T-cell (primary cell): ENCODE measurements at regions of chr7 and their contacts with region 1.

Region 1: DNA sequence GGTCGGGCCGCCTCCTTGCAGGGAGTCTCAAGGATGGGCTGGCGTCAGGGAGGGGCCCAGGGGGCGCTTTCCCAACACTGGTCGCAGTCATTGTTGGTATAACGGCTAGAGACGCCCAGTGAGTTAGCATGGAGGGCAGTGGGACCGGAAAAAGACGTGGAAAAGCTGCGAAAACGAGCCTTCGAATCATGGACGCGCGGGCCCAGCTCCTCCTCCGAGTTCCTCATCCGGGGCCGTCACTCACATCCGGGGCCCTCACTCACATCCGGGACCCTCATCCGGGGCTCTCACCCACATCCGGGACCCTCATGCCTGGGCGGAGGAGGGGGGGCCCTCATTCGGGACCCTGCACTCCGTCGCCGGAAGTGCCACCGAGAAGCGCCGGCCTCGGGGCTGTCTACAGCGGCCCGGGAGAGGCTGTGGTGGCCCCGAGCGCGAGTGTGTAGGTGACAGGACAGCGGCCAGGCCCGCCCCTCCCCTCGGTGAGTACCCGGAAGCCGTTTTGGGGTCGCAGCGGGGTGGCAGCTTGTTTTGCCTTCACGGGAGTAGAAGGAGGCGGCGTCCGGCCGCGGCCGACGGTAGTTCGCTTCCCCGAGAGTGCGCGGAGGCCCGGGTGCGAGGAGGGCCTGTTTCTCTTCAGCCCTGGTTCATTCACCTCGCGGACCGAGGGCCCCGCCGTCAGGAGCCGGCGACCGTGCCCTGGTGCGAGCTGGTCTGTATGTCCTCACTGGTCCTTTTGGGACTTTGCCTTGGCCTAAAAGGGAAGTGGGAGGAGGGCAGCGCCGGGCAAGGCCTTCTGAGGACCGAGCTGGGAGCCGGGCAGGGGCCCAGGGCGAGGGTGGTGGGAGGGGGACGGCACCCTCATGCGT is at the start of gene ZNF655:
- DNase-seq: peak; percentile 86 to 96 (median 93)
- ATAC-seq: peak; percentile 84 to 88 (median 84)
- H3K4me3 ChIP-seq: peak within 1 kb of the TSS; percentile 85 to 98
- H3K4me3 Mint-ChIP-seq: peak within 1 kb of the TSS; percentile 93 to 99 (median 99)
- H3K27ac ChIP-seq: peak within 1 kb of the TSS; percentile 95
- H3K27ac Mint-ChIP-seq: peak within 1 kb of the TSS; percentile 99 to 100
- H3K4me1 ChIP-seq: peaks cover 14 to 34% of the 10 kb centered on the region in 2 experiments
- H3K4me1 Mint-ChIP-seq: peaks cover 55 to 66% (median 59%) of the 10 kb centered on the region in 3 donors
- H3K27me3 ChIP-seq: no peaks in the 10 kb centered on the region
- H3K27me3 Mint-ChIP-seq: no peaks in the 10 kb centered on the region
- total RNA-seq, gene ZNF655: 145 to 163 (median 157) TPM

Region 2: DNA sequence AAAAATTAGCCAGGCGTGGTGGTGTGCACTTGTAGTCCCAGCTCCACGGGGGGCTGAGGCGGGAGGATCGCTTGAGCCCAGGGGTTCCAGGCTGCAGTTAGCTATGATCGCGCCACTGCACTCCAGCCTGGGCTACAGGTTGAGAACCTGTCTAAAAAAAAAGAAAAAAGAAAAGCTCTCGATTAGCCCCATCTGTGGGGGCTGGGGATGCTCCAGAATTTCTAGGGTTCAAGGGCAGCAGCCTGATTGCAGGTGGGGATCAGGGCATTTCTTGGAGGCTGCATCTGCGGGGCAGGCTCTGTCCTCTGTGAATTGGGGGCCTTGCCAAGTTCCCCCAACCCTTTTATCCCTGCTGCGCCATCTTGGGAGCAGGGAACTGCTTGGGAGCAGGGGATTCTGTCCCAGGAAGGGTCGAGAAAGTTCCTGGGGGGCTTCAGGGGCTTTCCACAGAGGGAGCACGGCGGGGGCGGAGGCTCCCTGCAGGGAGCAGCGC is 233.5 kb before region 1 on chr7:
- CTCF ChIA-PET with region 1: no interaction called
- POLR2A ChIA-PET with region 1: no interaction called
- DNase-seq: peak in 1 of 35 experiments; percentile 12
- ATAC-seq: no peak
- H3K4me3 ChIP-seq: peak overlapping the region; percentile 92 to 95
- H3K4me3 Mint-ChIP-seq: peak overlapping the region; percentile 84 to 94 (median 88)
- H3K27ac ChIP-seq: peak overlapping the region; percentile 73
- H3K27ac Mint-ChIP-seq: peak overlapping the region in 1 of 2 donors; percentile 90
- H3K4me1 ChIP-seq: peaks cover 24 to 36% of the 10 kb centered on the region in 2 experiments
- H3K4me1 Mint-ChIP-seq: peaks cover 35 to 37% (median 36%) of the 10 kb centered on the region in 3 donors
- H3K27me3 ChIP-seq: no peaks in the 10 kb centered on the region
- H3K27me3 Mint-ChIP-seq: no peaks in the 10 kb centered on the region

Region 3: DNA sequence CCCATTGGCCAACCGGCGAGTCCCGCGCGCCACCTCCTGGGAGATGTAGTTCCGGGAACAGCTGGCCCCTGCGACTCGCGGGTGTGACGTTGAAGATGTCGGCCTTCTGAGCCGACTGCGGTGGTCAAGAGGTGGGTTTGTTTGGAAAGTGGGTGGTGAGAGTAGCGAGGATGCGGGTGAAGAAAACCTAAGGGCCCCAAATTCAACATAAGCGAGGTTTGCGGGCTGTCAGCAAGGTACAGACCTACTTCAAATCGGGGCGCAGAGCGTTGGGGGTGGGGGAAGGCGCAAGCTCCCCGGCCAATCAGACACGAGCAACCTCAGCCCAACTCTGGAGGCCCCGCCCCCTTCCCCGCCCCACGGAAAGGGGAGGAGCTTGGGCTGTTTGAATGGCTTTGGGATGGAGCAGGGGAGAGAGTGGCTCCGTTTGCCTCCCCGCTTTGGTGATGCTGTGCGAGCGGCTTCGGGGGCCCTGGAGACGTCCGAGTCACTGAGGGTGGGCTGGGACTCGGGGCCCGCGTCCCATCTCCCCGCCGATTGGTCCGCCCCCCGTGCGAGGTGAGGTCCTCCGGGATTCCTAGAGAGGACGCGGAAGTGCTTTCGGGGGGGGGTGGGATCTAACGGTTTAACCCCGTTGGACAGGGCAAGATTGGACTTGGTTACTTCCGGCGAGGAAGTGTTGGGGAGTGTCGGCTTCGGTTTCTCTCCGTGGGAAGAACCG is 53.8 kb before region 1 on chr7 and contains the start of gene ZKSCAN5:
- CTCF ChIA-PET with region 1: no interaction called
- POLR2A ChIA-PET with region 1: interaction called, 3 to 10 read pairs
- DNase-seq: peak; percentile 90 to 99 (median 96)
- ATAC-seq: peak; percentile 85 to 89 (median 87)
- H3K4me3 ChIP-seq: peak within 1 kb of the TSS; percentile 84 to 92
- H3K4me3 Mint-ChIP-seq: peak within 1 kb of the TSS; percentile 89 to 99 (median 96)
- H3K27ac ChIP-seq: peak within 1 kb of the TSS; percentile 82
- H3K27ac Mint-ChIP-seq: peak within 1 kb of the TSS; percentile 98 to 99
- H3K4me1 ChIP-seq: peaks cover 16 to 38% of the 10 kb centered on the region in 2 experiments
- H3K4me1 Mint-ChIP-seq: peaks cover 27 to 43% (median 32%) of the 10 kb centered on the region in 3 donors
- H3K27me3 ChIP-seq: no peaks in the 10 kb centered on the region
- H3K27me3 Mint-ChIP-seq: no peaks in the 10 kb centered on the region
- total RNA-seq, gene ZKSCAN5: 5.4 to 9.1 (median 8.2) TPM

Region 4: DNA sequence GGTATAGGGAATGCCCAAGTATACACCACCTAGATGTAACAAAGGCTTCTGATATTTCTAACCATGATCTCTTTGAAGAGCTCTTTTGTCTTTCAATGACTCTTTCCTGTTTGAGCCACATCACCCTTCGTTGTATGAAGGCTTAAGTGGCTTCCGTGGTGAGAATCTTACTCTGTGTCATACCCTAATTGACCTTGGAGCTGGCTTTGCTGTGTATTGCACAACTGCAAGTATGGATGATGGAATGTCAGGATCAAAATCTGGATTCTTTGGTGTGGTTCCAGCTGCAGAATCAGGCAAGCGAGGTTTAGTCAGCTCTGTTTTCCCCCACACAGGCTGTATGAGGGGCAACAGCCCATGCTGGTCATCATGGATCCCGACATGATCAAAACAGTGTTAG is 285.3 kb after region 1 on chr7:
- CTCF ChIA-PET with region 1: no interaction called
- POLR2A ChIA-PET with region 1: no interaction called
- DNase-seq: no peak
- ATAC-seq: no peak
- H3K4me3 ChIP-seq: no peak overlapping the region
- H3K4me3 Mint-ChIP-seq: no peak overlapping the region
- H3K27ac ChIP-seq: no peak overlapping the region
- H3K27ac Mint-ChIP-seq: no peak overlapping the region
- H3K4me1 ChIP-seq: no peaks in the 10 kb centered on the region
- H3K4me1 Mint-ChIP-seq: no peaks in the 10 kb centered on the region
- H3K27me3 ChIP-seq: peaks cover 0 to 6% of the 10 kb centered on the region in 2 experiments
- H3K27me3 Mint-ChIP-seq: peaks cover 8 to 15% of the 10 kb centered on the region in 2 donors